ENCODE measurements at regions of chr6 and their contacts with region 1.

Region 1: DNA sequence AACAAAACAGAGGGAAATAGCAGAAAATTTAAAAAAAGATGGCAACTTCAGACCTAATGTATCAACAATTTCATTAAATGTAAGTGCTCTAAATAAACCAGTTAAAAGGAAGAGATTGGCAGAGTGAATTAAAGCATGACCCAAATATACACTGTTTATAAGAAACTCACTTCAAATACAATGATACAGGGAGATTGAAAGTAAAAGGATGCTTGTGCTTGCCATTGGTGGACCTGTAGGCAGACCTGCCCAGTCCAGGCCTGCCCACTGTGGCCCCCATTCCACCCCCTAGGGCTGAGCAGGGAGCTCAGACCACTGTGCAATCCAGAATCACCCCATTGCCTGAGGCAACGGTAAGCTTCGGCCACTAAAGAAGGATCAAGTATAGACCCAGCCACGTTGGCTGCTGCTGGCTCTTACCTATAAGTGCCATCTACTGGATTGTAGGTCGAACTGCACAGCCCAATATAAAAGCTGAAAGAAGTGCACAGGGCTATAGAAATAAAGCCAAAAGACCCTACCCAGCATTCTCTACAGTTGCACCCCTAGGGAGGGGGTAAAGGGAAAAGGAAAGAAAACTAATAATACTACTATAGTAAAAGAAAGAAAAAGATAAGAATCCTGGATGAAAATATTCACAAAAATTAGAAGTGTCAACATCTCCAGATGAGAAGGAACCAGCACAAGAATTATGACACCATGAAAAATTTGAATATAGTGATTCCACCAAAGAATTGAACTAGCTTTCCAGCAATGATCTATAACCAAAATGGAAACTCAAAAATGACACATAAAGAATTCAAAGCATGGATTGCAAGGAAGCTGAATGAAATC is 36.1 kb downstream of the PSMB1 start:
- DNase-seq: peak; percentile 8
- H3K4me3 Mint-ChIP-seq: peak overlapping the region; percentile 43
- H3K27ac Mint-ChIP-seq: no peak overlapping the region
- H3K4me1 Mint-ChIP-seq: no peaks in the 10 kb centered on the region
- H3K27me3 Mint-ChIP-seq: peaks cover 65% of the 10 kb centered on the region

Region 2: DNA sequence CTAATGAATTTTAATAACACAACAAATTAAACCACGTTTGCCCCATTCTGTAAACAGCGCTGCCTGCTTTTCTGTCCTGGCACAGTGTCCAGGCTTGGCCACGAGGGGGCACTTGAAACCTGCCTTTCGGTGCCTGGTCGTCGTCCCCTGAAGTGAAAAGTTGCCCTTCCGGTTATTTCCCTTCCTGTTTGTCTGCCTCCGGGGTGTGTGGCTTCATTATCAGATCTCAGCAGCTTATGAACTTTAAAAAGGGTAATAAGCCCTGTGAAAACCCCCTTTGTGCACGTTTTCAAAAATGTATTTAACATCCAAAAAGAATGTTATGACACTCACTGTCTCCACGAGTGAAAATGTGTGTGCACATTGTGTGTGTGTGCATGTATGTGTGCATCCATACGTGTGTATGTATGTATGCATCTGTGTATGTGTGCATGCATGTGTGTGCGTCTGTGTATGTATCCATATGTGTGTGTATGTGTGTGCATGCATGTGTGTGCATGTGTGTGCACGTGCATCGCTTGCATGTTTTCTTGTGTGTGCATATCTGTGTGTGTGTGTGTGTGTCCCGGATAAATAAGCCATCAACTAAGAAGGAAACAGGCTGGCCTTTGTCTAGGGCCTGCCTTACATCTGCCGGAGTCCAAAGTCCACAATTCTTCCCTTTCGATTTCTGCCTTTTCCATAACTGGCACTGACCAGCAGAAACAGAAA is 1621.7 kb before region 1 on chr6:
- intact Hi-C with region 1: loop called (anchors 2 kb)
- DNase-seq: peak; percentile 53
- H3K4me3 Mint-ChIP-seq: peak overlapping the region; percentile 41
- H3K27ac Mint-ChIP-seq: no peak overlapping the region
- H3K4me1 Mint-ChIP-seq: peaks cover 8% of the 10 kb centered on the region
- H3K27me3 Mint-ChIP-seq: peaks cover 4% of the 10 kb centered on the region

Region 3: GRCh38 chr6:168956884-168957730 is 1559.9 kb before region 1 on chr6:
- intact Hi-C with region 1: loop called (anchors 1 kb)
- DNase-seq: no peak
- H3K4me3 Mint-ChIP-seq: no peak overlapping the region
- H3K27ac Mint-ChIP-seq: no peak overlapping the region
- H3K4me1 Mint-ChIP-seq: no peaks in the 10 kb centered on the region
- H3K27me3 Mint-ChIP-seq: peaks cover 1% of the 10 kb centered on the region

Region 4: GRCh38 chr6:169789982-169790927 is 726.7 kb before region 1 on chr6:
- intact Hi-C with region 1: loop called (anchors 1 kb)
- DNase-seq: peak; percentile 62
- H3K4me3 Mint-ChIP-seq: peak overlapping the region; percentile 84
- H3K27ac Mint-ChIP-seq: peak overlapping the region; percentile 34
- H3K4me1 Mint-ChIP-seq: peaks cover 22% of the 10 kb centered on the region
- H3K27me3 Mint-ChIP-seq: peaks cover 24% of the 10 kb centered on the region

Region 5: GRCh38 chr6:169831450-169832246 is 685.4 kb before region 1 on chr6:
- intact Hi-C with region 1: loop called (anchors 1 kb)
- DNase-seq: peak; percentile 45
- H3K4me3 Mint-ChIP-seq: no peak overlapping the region
- H3K27ac Mint-ChIP-seq: no peak overlapping the region
- H3K4me1 Mint-ChIP-seq: peaks cover 5% of the 10 kb centered on the region
- H3K27me3 Mint-ChIP-seq: no peaks in the 10 kb centered on the region

Region 6: DNA sequence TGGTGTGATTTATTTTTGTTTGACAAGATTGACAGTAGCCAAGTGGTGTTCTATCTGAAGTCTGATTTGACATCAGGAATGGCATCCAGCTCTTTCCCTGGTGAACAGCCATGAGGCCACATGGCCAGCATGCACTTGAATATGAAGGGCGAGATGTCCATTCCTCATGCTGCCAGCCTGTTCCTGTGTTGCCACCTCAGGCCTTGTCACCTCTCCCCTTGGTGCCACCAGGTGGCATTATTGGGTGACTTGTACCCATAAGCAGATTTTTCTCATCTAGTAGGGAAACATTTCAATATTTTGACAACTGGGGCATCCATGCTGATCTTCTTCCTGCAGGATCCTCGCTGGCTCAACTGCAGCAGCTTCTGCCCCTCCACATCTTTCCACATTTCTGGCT is 566.4 kb before region 1 on chr6:
- intact Hi-C with region 1: loop called (anchors 1 kb)
- DNase-seq: no peak
- H3K4me3 Mint-ChIP-seq: no peak overlapping the region
- H3K27ac Mint-ChIP-seq: no peak overlapping the region
- H3K4me1 Mint-ChIP-seq: no peaks in the 10 kb centered on the region
- H3K27me3 Mint-ChIP-seq: peaks cover 13% of the 10 kb centered on the region

Region 7: DNA sequence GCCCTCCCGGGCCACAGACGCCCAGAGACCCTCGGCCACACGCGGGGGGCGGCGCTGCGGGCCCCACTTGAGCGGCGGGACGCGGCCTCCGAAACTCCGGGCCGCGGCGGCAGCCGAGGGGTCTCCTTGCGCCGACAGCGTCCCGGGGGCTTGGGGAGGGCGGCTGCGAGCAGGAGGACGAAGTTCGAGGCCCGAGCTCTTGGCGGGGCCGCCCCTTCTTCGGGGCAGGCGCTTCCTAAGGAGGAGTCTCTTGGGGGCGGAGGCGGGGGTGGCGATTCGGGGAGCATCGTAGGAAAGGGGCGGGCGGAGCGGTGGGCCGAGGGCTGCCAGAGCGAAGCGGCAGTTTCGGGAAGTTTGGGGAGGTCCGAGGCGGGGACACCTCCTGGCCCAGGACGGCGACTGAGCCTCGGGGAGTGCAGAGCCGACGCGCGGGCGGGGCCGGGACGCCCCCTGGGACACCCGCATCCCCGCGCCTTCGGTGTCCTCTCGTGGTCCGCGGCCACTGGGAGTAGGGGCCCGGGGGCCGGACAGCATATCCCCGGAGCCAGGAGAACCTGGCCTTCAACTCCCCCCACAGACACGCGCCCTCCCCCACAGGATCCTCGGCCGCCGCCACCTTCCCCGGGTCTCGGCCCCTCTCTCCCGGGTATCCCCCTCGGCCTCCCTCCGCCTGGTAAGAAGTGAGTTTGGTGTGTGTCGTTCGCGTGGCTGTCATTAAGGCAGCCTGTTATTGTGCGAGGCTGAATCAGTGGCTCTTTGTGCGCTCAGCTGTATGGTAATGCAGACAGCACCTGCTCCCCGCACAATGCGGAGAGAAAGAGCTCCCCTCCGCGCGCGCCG is 225.5 kb before region 1 on chr6:
- intact Hi-C with region 1: loop called (anchors 5 kb)
- DNase-seq: no peak
- H3K4me3 Mint-ChIP-seq: peak overlapping the region; percentile 85
- H3K27ac Mint-ChIP-seq: peak overlapping the region; percentile 75
- H3K4me1 Mint-ChIP-seq: peaks cover 50% of the 10 kb centered on the region
- H3K27me3 Mint-ChIP-seq: peaks cover 72% of the 10 kb centered on the region

Region 8: GRCh38 chr6:170429450-170429849 is 87.5 kb before region 1 on chr6:
- intact Hi-C with region 1: no loop called
- DNase-seq: no peak
- H3K4me3 Mint-ChIP-seq: no peak overlapping the region
- H3K27ac Mint-ChIP-seq: no peak overlapping the region
- H3K4me1 Mint-ChIP-seq: no peaks in the 10 kb centered on the region
- H3K27me3 Mint-ChIP-seq: peaks cover 13% of the 10 kb centered on the region

Region 9: GRCh38 chr6:170497845-170498301 is 19.1 kb before region 1 on chr6:
- intact Hi-C with region 1: no loop called
- DNase-seq: no peak
- H3K4me3 Mint-ChIP-seq: no peak overlapping the region
- H3K27ac Mint-ChIP-seq: no peak overlapping the region
- H3K4me1 Mint-ChIP-seq: no peaks in the 10 kb centered on the region
- H3K27me3 Mint-ChIP-seq: peaks cover 25% of the 10 kb centered on the region